ENCODE measurements at regions of chr1 and their contacts with region 1.

Region 1: GRCh38 chr1:203273206-203273868 is 32.0 kb upstream of the BTG2 start:
- DNase-seq: peak; percentile 58
- ATAC-seq: peak; percentile 97
- H3K4me3 ChIP-seq: peak overlapping the region in 2 of 3 experiments; percentile 28 to 65; a peak in 4 of 6 replicates
- H3K27ac ChIP-seq: no peak overlapping the region
- H3K4me1 ChIP-seq: peaks cover 11% of the 10 kb centered on the region; the same call in 1 of the 2 replicates
- H3K27me3 ChIP-seq: peaks cover 1 to 30% of the 10 kb centered on the region in 2 experiments; a peak in 3 of 5 replicates
- CTCF ChIP-seq: peak; percentile 98
- EP300 ChIP-seq: no peak
- POLR2A ChIP-seq: no peak
- RAD21 ChIP-seq: peak; percentile 95

Region 2: DNA sequence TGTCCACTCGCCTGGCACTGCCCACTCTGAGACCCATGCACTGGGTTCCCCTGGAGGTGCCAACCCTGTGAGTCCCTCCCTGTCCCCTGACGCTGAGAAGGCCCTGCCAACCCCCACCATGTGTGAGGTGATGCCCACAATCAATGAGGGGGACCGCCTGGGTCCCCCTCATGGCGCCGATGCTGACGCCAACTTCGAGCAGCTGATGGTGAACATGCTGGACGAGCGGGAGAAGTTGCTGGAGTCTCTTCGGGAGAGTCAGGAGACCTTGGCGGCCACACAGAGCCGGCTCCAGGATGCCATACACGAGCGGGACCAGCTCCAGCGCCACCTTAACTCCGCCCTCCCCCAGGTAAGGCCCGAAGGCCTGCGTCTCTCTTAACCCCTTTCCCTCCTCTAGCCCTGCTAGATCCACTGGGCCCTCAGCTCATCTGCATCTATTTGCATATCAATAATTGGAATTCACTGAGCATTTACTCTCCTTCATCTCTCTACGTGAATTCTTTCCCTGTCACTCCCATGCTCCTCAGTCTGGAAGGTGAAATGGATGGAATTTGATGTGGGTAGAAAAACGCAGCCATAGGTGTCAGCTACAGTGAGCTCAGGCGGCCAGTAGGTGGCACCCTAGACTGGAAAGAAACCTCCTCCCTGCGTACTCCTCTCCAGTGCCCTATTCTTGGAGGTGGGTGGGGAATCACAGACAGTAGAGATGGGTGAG is 234.3 kb before region 1 on chr1:
- CTCF ChIA-PET with region 1: no interaction called
- POLR2A ChIA-PET with region 1: no interaction called
- in situ Hi-C with region 1: loop called (anchors 5 kb)
- intact Hi-C with region 1: loop called (anchors 2 kb)
- DNase-seq: peak; percentile 34
- ATAC-seq: peak; percentile 91
- H3K4me3 ChIP-seq: no peak overlapping the region
- H3K27ac ChIP-seq: no peak overlapping the region
- H3K4me1 ChIP-seq: no peaks in the 10 kb centered on the region
- H3K27me3 ChIP-seq: peaks cover under 1 to 26% of the 10 kb centered on the region in 2 experiments; a peak in 3 of 5 replicates
- CTCF ChIP-seq: peak; percentile 89
- EP300 ChIP-seq: no peak
- POLR2A ChIP-seq: no peak
- RAD21 ChIP-seq: peak; percentile 38; the same call in 1 of the 2 replicates

Region 3: DNA sequence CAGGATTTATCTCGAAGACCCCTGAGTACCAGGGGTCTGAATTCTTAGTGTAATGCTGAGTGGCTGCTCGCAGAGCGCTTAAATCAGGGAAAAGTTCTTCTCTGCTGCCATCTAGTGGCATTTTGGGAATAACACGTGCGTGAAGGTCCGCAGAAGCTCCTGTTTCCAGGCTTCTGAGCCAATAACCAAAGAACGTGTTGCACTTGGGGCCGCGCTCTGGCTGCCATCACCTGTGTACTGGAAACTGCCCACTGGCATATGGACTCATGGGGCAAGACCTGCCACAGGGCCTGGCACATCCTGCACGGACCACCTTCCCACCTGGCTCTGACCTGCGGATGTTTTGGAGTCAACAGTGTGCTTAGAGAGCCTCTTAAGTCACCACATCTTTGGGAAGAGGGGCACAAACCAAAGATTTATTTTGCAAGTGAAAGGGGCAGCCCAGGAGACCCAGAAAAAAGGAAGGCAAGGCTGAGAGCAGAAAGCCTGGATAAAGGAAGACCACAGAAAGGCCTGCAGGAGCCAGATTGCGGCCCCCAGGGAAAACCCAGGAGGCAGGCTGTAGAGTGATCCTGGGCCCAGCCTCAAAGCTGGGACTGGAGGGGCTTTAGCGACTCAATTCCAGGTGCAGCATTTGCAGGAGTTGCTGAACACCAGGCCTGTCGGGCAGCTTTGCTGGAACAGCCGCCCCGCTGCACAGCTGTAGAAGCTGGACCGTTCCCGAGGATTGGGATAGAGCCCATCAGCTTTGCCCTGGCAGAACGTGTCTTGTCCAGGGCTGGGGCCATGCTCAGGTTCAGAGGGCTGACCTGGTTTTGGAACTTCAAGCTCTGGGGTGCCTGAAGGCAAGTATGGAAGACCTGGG is 56.8 kb before region 1 on chr1:
- CTCF ChIA-PET with region 1: no interaction called
- POLR2A ChIA-PET with region 1: no interaction called
- in situ Hi-C with region 1: loop called (anchors 5 kb)
- intact Hi-C with region 1: no loop called
- DNase-seq: peak; percentile 53
- ATAC-seq: peak; percentile 84
- H3K4me3 ChIP-seq: no peak overlapping the region
- H3K27ac ChIP-seq: no peak overlapping the region
- H3K4me1 ChIP-seq: peaks cover 5% of the 10 kb centered on the region
- H3K27me3 ChIP-seq: peaks cover 0 to 22% of the 10 kb centered on the region in 2 experiments; a peak in 3 of 5 replicates
- CTCF ChIP-seq: peak; percentile 85
- EP300 ChIP-seq: no peak
- POLR2A ChIP-seq: no peak
- RAD21 ChIP-seq: peak; percentile 71; the same call in 1 of the 2 replicates

Region 4: GRCh38 chr1:203326830-203327683 is 53.7 kb after region 1 on chr1:
- CTCF ChIA-PET with region 1: interaction called, 13 read pairs
- POLR2A ChIA-PET with region 1: no interaction called
- in situ Hi-C with region 1: loop called (anchors 5 kb)
- intact Hi-C with region 1: loop called (anchors 1 kb)
- DNase-seq: peak; percentile 75
- ATAC-seq: peak; percentile 97
- H3K4me3 ChIP-seq: peak overlapping the region; percentile 55 to 68 (median 56); a peak in 5 of 6 replicates
- H3K27ac ChIP-seq: no peak overlapping the region
- H3K4me1 ChIP-seq: peaks cover 45% of the 10 kb centered on the region
- H3K27me3 ChIP-seq: peaks cover 5 to 18% of the 10 kb centered on the region in 2 experiments; a peak in 1 of 5 replicates
- CTCF ChIP-seq: no peak
- EP300 ChIP-seq: peak in 1 of 2 experiments; percentile 79; a peak in 2 of 4 replicates
- POLR2A ChIP-seq: no peak
- RAD21 ChIP-seq: no peak

Region 5: DNA sequence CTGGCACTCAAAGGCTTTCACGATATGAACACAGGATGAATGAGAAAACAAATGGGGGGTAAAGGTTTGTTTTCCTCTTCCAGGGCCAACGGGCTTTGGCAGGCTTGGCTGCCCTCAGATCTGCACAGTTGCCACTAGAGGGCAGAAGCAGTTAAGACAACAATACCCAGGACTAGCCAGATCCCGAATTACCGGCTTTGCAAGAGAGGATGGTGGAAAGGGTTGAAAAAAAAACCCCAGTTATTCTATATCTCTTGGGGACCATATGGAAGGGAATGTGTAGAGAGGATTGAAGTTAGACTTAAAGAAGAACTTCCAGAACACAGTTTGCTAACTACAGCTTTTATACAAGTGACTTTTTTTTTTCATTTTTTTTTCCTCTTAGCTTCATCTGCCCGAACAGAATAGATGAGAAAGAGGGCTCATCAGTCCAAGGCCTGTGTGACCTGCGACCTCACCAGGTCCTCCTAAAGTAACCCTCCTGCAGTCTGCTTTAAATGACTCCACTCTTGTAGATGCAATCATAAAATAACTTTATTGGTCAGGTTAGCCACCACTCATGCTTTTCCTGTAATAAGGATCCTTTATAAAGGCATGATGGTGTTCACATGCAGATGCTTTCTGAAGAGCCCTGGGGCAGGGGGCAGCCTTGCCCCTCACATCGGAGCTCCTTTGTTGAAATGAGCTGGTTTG is 66.9 kb after region 1 on chr1:
- CTCF ChIA-PET with region 1: interaction called, 41 read pairs
- POLR2A ChIA-PET with region 1: no interaction called
- in situ Hi-C with region 1: no loop called
- intact Hi-C with region 1: loop called (anchors 1 kb)
- DNase-seq: peak; percentile 69
- ATAC-seq: peak; percentile 85
- H3K4me3 ChIP-seq: no peak overlapping the region
- H3K27ac ChIP-seq: no peak overlapping the region
- H3K4me1 ChIP-seq: peaks cover 6% of the 10 kb centered on the region; the same call in 1 of the 2 replicates
- H3K27me3 ChIP-seq: peaks cover 0 to 21% of the 10 kb centered on the region in 2 experiments; a peak in 2 of 5 replicates
- CTCF ChIP-seq: peak; percentile 86
- EP300 ChIP-seq: no peak
- POLR2A ChIP-seq: no peak
- RAD21 ChIP-seq: peak; percentile 63

Region 6: GRCh38 chr1:203480525-203481084 is 207.3 kb after region 1 on chr1:
- CTCF ChIA-PET with region 1: no interaction called
- POLR2A ChIA-PET with region 1: no interaction called
- in situ Hi-C with region 1: loop called (anchors 10 kb)
- intact Hi-C with region 1: loop called (anchors 5 kb)
- DNase-seq: no peak
- ATAC-seq: peak; percentile 31; the same call in 1 of the 3 replicates
- H3K4me3 ChIP-seq: no peak overlapping the region
- H3K27ac ChIP-seq: no peak overlapping the region
- H3K4me1 ChIP-seq: no peaks in the 10 kb centered on the region
- H3K27me3 ChIP-seq: peaks cover 1 to 39% of the 10 kb centered on the region in 2 experiments; a peak in 2 of 5 replicates
- CTCF ChIP-seq: no peak
- EP300 ChIP-seq: no peak
- POLR2A ChIP-seq: no peak
- RAD21 ChIP-seq: no peak

Region 7: GRCh38 chr1:203486618-203487370 is 213.5 kb after region 1 on chr1:
- CTCF ChIA-PET with region 1: no interaction called
- POLR2A ChIA-PET with region 1: no interaction called
- in situ Hi-C with region 1: loop called (anchors 10 kb)
- intact Hi-C with region 1: loop called (anchors 5 kb)
- DNase-seq: no peak
- ATAC-seq: no peak
- H3K4me3 ChIP-seq: no peak overlapping the region
- H3K27ac ChIP-seq: no peak overlapping the region
- H3K4me1 ChIP-seq: no peaks in the 10 kb centered on the region
- H3K27me3 ChIP-seq: peaks cover 2 to 23% of the 10 kb centered on the region in 2 experiments; a peak in 3 of 5 replicates
- CTCF ChIP-seq: no peak
- EP300 ChIP-seq: no peak
- POLR2A ChIP-seq: no peak
- RAD21 ChIP-seq: no peak

Measured in HepG2 (cell line).